ENCODE measurements at regions of chr16 and their contacts with region 1.

Region 1: DNA sequence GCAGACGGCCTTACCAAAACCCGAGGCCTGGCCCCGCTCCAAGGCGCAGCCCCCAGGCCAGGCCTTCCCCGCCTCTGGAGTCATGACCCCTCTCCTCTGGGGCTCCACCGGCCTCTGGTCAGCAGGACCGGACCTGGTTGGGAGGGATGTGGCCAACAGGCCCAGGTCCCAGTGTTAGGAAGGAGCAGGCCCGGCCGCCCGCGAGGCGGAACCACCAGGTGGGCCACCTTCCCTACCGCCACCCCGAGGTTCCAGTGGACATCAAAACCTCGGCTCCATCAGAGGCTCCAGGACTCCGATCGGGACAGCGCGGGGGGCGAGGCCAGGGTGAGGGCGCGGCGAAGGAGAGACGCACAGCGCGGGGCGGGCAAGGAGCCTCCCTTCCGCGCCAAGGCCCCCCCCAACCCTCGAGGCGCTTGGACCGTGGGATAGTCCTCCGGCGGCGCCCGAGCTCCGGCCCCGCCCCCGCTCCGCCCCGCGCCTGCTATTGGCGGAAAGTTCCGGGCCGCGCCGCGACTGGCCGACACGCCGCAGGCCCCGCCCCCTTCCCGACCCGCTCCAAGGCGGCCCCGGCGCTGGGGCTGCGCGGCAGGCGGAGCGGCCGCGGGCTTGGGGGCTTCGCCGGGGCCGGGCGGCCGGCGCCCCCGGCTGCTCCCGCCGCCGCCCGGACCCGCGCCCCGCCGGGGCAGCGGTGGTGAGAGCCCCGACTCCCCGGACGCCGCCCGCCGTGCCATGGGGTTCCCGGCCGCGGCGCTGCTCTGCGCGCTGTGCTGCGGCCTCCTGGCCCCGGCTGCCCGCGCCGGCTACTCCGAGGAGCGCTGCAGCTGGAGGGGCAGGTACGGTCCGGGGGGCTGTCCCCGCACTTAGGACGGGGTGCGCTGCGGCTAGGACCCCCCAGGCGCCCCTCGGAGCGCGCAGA is at the start of gene METRN:
- DNase-seq: peak; percentile 73 to 94 (median 89)
- ATAC-seq: peak; percentile 93
- H3K4me3 ChIP-seq: peak within 1 kb of the TSS; percentile 22 to 54
- H3K4me3 Mint-ChIP-seq: peak within 1 kb of the TSS; percentile 76
- H3K27ac ChIP-seq: no peak within 1 kb of the TSS
- H3K27ac Mint-ChIP-seq: no peak within 1 kb of the TSS
- H3K4me1 ChIP-seq: peaks cover 27% of the 10 kb centered on the region
- H3K4me1 Mint-ChIP-seq: peaks cover 24% of the 10 kb centered on the region
- H3K27me3 ChIP-seq: peaks cover 12 to 21% of the 10 kb centered on the region in 2 experiments
- H3K27me3 Mint-ChIP-seq: peaks cover 4% of the 10 kb centered on the region
- CTCF ChIP-seq: no peak
- total RNA-seq, gene METRN: 9.2 to 10.1 TPM

Region 2: GRCh38 chr16:641302-642188 is 73.3 kb before region 1 on chr16 and contains the start of gene MCRIP2:
- CTCF ChIA-PET with region 1: no interaction called
- POLR2A ChIA-PET with region 1: no interaction called
- intact Hi-C with region 1: no loop called
- DNase-seq: peak in 7 of 9 experiments; percentile 43 to 77 (median 59)
- ATAC-seq: peak; percentile 11
- H3K4me3 ChIP-seq: peak within 1 kb of the TSS; percentile 49 to 68
- H3K4me3 Mint-ChIP-seq: peak within 1 kb of the TSS; percentile 66
- H3K27ac ChIP-seq: peak within 1 kb of the TSS in 1 of 2 experiments; percentile 37
- H3K27ac Mint-ChIP-seq: no peak within 1 kb of the TSS
- H3K4me1 ChIP-seq: peaks cover 22% of the 10 kb centered on the region
- H3K4me1 Mint-ChIP-seq: peaks cover 12% of the 10 kb centered on the region
- H3K27me3 ChIP-seq: no peaks in the 10 kb centered on the region
- H3K27me3 Mint-ChIP-seq: no peaks in the 10 kb centered on the region
- CTCF ChIP-seq: no peak
- total RNA-seq, gene MCRIP2: 15.9 to 19.2 TPM

Region 3: GRCh38 chr16:700684-701584 is 13.9 kb before region 1 on chr16:
- CTCF ChIA-PET with region 1: interaction called, 11 read pairs
- POLR2A ChIA-PET with region 1: interaction called, 31 read pairs
- intact Hi-C with region 1: no loop called
- DNase-seq: peak in 4 of 9 experiments; percentile 62 to 74 (median 70)
- ATAC-seq: peak; percentile 85
- H3K4me3 ChIP-seq: no peak overlapping the region
- H3K4me3 Mint-ChIP-seq: no peak overlapping the region
- H3K27ac ChIP-seq: no peak overlapping the region
- H3K27ac Mint-ChIP-seq: no peak overlapping the region
- H3K4me1 ChIP-seq: peaks cover 34% of the 10 kb centered on the region
- H3K4me1 Mint-ChIP-seq: peaks cover 12% of the 10 kb centered on the region
- H3K27me3 ChIP-seq: peaks cover 20 to 30% of the 10 kb centered on the region in 2 experiments
- H3K27me3 Mint-ChIP-seq: peaks cover 12% of the 10 kb centered on the region
- CTCF ChIP-seq: no peak

Region 4: DNA sequence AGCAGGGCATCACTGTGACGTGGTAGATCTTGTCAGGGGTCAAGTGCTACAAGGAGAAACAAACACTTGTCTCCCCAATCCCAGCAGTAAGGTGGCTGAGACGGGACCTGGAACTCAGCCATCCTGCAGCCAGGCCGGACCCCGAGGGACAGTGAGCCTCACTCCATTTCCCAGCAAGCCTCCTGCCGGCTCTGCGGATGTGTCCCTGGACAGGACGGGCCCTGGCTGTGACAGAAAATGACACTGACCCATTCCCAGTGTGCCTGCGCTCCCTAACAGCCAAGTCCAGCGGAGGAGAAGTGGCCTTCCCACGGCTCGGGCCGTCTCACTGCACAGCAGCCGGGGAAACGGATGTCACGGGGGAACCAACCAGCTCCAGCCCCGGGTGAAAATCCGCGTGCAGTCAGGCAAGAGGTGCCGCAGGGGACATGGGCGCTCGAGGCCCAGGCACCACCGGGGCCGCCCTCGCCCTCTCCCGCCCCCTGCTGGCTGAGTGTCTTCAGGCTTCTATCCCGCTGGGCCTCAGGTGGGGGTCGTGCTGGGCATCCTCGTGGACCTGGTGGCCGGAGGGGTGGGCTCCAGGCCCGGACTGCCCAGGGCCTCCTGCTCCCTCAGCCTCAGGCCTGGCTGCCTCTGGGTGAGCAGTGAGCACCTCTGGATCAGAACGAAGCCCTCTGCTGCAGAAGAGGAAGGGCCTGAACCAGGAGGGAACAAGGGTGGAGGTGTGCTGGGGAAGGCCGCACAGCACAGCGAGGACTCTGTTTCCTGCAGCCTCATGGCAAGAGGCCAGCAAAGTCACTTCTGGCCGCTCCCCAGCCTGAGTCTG is 18.8 kb after region 1 on chr16:
- CTCF ChIA-PET with region 1: interaction called, 353 read pairs
- POLR2A ChIA-PET with region 1: interaction called, 53 read pairs
- intact Hi-C with region 1: loop called (anchors 1 kb)
- DNase-seq: peak in 4 of 9 experiments; percentile 41 to 63 (median 59)
- ATAC-seq: peak; percentile 61
- H3K4me3 ChIP-seq: no peak overlapping the region
- H3K4me3 Mint-ChIP-seq: no peak overlapping the region
- H3K27ac ChIP-seq: no peak overlapping the region
- H3K27ac Mint-ChIP-seq: no peak overlapping the region
- H3K4me1 ChIP-seq: peaks cover 1% of the 10 kb centered on the region
- H3K4me1 Mint-ChIP-seq: peaks cover 2% of the 10 kb centered on the region
- H3K27me3 ChIP-seq: no peaks in the 10 kb centered on the region
- H3K27me3 Mint-ChIP-seq: no peaks in the 10 kb centered on the region
- CTCF ChIP-seq: peak; percentile 40

Region 5: DNA sequence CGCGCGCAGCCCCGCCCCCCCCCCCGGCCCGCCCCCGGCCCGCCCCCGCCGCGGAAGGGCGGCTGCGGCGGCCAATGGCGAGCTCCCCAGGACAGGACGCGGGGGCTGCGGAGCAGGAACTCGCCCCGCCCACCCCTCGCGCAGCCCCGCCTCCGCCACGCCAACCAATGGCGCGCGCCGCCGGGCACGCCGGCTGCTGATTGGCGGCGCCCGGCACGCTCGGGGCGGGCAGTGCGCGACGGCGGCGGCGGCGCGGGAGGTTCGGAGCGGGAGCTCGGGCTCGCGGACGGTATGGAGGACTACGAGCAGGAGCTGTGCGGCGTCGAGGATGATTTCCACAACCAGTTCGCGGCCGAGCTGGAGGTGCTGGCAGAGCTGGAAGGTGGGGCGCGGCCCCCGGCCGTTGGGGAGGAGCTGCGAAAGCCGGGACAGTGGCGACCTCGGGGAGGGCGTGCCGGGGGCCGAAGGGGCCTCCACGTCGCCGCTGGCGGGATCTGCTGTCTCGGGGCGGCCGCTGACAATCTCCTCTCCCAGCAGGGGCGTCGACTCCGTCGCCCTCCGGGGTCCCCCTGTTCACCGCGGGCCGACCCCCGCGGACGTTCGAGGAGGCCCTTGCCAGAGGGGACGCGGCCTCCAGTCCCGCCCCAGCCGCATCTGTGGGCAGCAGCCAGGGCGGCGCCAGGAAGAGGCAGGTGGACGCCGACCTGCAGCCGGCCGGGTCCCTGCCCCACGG is 73.7 kb after region 1 on chr16 and contains the start of gene CHTF18:
- CTCF ChIA-PET with region 1: interaction called, 143 read pairs
- POLR2A ChIA-PET with region 1: interaction called, 14 read pairs
- intact Hi-C with region 1: loop called in 1 of 2 experiments (anchors 1 kb)
- DNase-seq: peak; percentile 88 to 96 (median 92)
- ATAC-seq: peak; percentile 98
- H3K4me3 ChIP-seq: peak within 1 kb of the TSS; percentile 81 to 97
- H3K4me3 Mint-ChIP-seq: peak within 1 kb of the TSS; percentile 84
- H3K27ac ChIP-seq: peak within 1 kb of the TSS; percentile 10 to 53
- H3K27ac Mint-ChIP-seq: peak within 1 kb of the TSS; percentile 49
- H3K4me1 ChIP-seq: peaks cover 19% of the 10 kb centered on the region
- H3K4me1 Mint-ChIP-seq: peaks cover 7% of the 10 kb centered on the region
- H3K27me3 ChIP-seq: no peaks in the 10 kb centered on the region
- H3K27me3 Mint-ChIP-seq: no peaks in the 10 kb centered on the region
- CTCF ChIP-seq: no peak
- total RNA-seq, gene CHTF18: 34.4 to 38.4 TPM

Region 6: DNA sequence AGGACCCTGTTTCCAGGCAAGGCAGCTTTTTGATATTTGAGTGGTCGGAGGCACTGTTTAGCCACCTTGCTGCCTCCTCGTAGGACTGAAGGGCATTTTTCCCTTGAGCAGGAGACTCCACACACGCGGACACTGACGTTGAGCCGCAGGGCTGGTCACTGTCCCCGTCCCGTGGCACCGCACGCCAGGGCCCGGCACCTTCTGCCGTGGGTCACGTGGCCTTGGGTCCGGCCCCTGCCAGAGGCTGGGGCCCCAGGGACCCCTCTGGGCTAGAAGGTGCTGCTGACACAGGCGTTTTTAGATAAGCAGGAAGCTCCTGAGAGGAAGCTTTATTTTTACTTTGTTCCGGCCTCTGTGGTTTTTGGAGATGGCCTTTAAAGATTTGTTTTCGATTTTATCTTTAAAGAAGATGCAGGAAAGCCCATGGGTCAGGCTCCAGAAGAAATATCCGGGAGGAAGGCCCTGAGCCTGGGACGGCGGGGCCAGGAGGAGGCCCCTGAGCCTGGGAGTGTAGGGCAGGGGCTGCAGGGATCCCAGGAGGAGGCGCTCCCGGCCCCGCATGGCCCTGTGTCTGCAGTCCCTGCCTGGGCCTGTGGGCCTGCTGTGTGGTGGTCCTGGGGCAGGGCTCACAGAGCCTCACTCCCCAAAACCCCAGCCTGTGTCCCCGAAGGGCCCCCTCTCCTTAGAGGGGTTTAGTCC is 116.2 kb after region 1 on chr16:
- CTCF ChIA-PET with region 1: no interaction called
- POLR2A ChIA-PET with region 1: no interaction called
- intact Hi-C with region 1: no loop called
- DNase-seq: no peak
- ATAC-seq: no peak
- H3K4me3 ChIP-seq: no peak overlapping the region
- H3K4me3 Mint-ChIP-seq: no peak overlapping the region
- H3K27ac ChIP-seq: no peak overlapping the region
- H3K27ac Mint-ChIP-seq: no peak overlapping the region
- H3K4me1 ChIP-seq: no peaks in the 10 kb centered on the region
- H3K4me1 Mint-ChIP-seq: no peaks in the 10 kb centered on the region
- H3K27me3 ChIP-seq: no peaks in the 10 kb centered on the region
- H3K27me3 Mint-ChIP-seq: no peaks in the 10 kb centered on the region
- CTCF ChIP-seq: no peak

Region 7: GRCh38 chr16:1105888-1106620 is 391.2 kb after region 1 on chr16:
- CTCF ChIA-PET with region 1: interaction called, 6 read pairs
- POLR2A ChIA-PET with region 1: no interaction called
- intact Hi-C with region 1: loop called in 1 of 2 experiments (anchors 1 kb)
- DNase-seq: peak in 8 of 9 experiments; percentile 9 to 58 (median 42)
- ATAC-seq: peak; percentile 53
- H3K4me3 ChIP-seq: no peak overlapping the region
- H3K4me3 Mint-ChIP-seq: no peak overlapping the region
- H3K27ac ChIP-seq: no peak overlapping the region
- H3K27ac Mint-ChIP-seq: no peak overlapping the region
- H3K4me1 ChIP-seq: no peaks in the 10 kb centered on the region
- H3K4me1 Mint-ChIP-seq: no peaks in the 10 kb centered on the region
- H3K27me3 ChIP-seq: peaks cover 9 to 15% of the 10 kb centered on the region in 2 experiments
- H3K27me3 Mint-ChIP-seq: peaks cover 8% of the 10 kb centered on the region
- CTCF ChIP-seq: peak; percentile 31